IMR-90 (cell line): ENCODE measurements at regions of chr11 and their contacts with region 1.

Region 1: GRCh38 chr11:95659088-95659487 is 130.5 kb downstream of the FAM76B start:
- DNase-seq: peak; percentile 72
- ATAC-seq: peak; percentile 86
- H3K4me3 ChIP-seq: no peak overlapping the region
- H3K27ac ChIP-seq: peak overlapping the region; percentile 33; the same call in 1 of the 2 replicates
- H3K4me1 ChIP-seq: peaks cover 2% of the 10 kb centered on the region
- H3K27me3 ChIP-seq: no peaks in the 10 kb centered on the region
- CTCF ChIP-seq: no peak
- POLR2A ChIP-seq: no peak
- RAD21 ChIP-seq: no peak

Region 2: GRCh38 chr11:95605271-95605940 is 53.7 kb before region 1 on chr11:
- CTCF ChIA-PET with region 1: no interaction called
- POLR2A ChIA-PET with region 1: no interaction called
- dilution Hi-C with region 1: no loop called
- in situ Hi-C with region 1: no loop called
- intact Hi-C with region 1: loop called (anchors 5 kb)
- DNase-seq: no peak
- ATAC-seq: no peak
- H3K4me3 ChIP-seq: no peak overlapping the region
- H3K27ac ChIP-seq: no peak overlapping the region
- H3K4me1 ChIP-seq: no peaks in the 10 kb centered on the region
- H3K27me3 ChIP-seq: no peaks in the 10 kb centered on the region; the same call in 1 of the 2 replicates
- CTCF ChIP-seq: no peak
- POLR2A ChIP-seq: no peak
- RAD21 ChIP-seq: no peak